PC-3 (cell line): ENCODE measurements at regions of chr15 and their contacts with region 1.

Region 1: GRCh38 chr15:41972253-41973242 is at the start of gene EHD4:
- DNase-seq: peak; percentile 100
- ATAC-seq: peak; percentile 90
- H3K4me3 ChIP-seq: peak within 1 kb of the TSS; percentile 87
- H3K27ac ChIP-seq: peak within 1 kb of the TSS; percentile 79
- H3K4me1 ChIP-seq: peaks cover 30% of the 10 kb centered on the region
- H3K27me3 ChIP-seq: no peaks in the 10 kb centered on the region
- CTCF ChIP-seq: peak; percentile 61
- total RNA-seq, gene EHD4: 57.8 and 66.9 TPM in 2 replicates

Region 2: DNA sequence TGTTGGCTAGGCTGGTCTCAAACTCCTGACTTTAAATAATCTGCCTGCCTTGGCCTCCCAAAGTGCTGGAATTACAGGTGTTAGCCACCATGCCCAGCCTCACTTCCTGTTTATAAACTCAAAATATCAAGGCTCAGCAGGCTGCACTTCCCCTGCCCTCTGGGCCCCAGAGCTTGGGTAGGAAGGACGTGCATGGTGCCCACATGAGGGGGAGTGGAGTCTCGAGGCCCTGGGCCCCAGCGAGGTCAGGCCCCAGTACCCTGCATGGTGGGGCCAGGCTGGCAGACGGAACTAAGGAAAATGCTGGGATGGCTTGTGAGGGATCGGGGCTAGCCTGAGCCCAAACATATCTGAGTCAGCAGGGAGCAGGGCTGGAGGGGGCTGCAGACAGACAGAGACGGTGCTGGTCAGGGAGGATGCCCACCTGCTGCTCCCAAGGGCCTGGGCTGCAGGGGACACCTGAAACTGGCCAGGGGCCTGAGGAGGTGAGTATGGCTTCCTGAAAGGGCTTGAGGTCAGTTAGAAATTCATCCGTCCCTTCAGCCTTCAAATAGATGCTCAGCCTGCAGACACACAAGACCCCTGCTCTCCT is 83.8 kb before region 1 on chr15:
- CTCF ChIA-PET with region 1: no interaction called
- POLR2A ChIA-PET with region 1: no interaction called
- intact Hi-C with region 1: no loop called
- DNase-seq: no peak
- ATAC-seq: no peak
- H3K4me3 ChIP-seq: no peak overlapping the region
- H3K27ac ChIP-seq: no peak overlapping the region
- H3K4me1 ChIP-seq: peaks cover 3% of the 10 kb centered on the region
- H3K27me3 ChIP-seq: no peaks in the 10 kb centered on the region
- CTCF ChIP-seq: no peak

Region 3: GRCh38 chr15:41930221-41930866 is 42.2 kb before region 1 on chr15:
- CTCF ChIA-PET with region 1: interaction called, 8 read pairs
- POLR2A ChIA-PET with region 1: interaction called, 20 read pairs
- intact Hi-C with region 1: loop called (anchors 1 kb)
- DNase-seq: peak; percentile 98
- ATAC-seq: peak; percentile 47
- H3K4me3 ChIP-seq: no peak overlapping the region; the same call in 1 of the 2 replicates
- H3K27ac ChIP-seq: peak overlapping the region; percentile 97
- H3K4me1 ChIP-seq: peaks cover 93% of the 10 kb centered on the region
- H3K27me3 ChIP-seq: no peaks in the 10 kb centered on the region
- CTCF ChIP-seq: no peak; the same call in 1 of the 2 replicates

Region 4: GRCh38 chr15:42240814-42241213 is 268.3 kb after region 1 on chr15:
- CTCF ChIA-PET with region 1: no interaction called
- POLR2A ChIA-PET with region 1: no interaction called
- intact Hi-C with region 1: no loop called
- DNase-seq: no peak
- ATAC-seq: no peak
- H3K4me3 ChIP-seq: no peak overlapping the region
- H3K27ac ChIP-seq: no peak overlapping the region
- H3K4me1 ChIP-seq: peaks cover 20% of the 10 kb centered on the region
- H3K27me3 ChIP-seq: no peaks in the 10 kb centered on the region
- CTCF ChIP-seq: no peak